Caki2 (cell line): ENCODE measurements at regions of chr4 and their contacts with region 1.

Region 1: GRCh38 chr4:16026160-16026761 is 57.6 kb downstream of the PROM1 start:
- DNase-seq: peak; percentile 32

Region 2: DNA sequence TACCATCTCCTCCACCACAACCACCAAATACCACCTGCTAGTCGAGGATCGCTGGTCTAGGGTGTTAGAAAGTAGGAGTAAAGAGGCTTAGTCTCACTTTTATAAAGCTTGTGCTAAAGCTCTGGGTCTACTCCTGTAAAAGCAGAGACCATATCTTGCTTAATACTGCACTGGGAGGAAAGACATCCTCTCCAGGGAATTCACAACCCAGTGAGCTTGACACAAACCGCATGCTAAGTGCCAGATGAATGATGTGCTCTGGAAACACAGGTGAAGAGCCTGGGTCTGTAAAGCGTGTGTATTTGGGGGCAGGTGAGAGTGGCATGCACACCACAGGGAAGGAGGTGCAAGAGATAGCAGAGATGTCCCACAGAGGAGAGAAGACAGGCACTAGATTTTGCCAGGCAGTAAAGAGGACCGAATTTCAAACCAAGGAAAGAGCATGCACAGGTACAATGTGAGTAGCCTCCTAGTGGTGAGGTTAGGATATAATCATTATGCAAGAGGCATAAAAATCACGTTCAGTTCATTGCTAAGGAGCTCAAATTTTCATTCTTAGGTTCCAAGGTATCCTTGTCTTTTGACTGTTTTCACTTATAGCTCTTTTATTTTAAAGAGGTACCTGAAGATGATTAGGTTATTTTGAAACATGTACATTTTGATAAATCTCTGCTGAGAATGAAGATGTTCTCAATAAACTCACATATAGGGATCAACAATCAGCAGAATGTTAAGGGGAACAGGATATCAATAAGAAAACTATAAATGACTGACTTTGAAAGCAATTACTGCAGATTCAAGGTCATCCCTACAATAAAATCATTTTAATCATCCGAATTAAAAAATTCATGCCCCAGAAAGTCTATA is 179.3 kb after region 1 on chr4:
- in situ Hi-C with region 1: loop called (anchors 25 kb)
- DNase-seq: peak; percentile 17